HEK293 (cell line): ENCODE measurements at regions of chr2 and their contacts with region 1.

Region 1: DNA sequence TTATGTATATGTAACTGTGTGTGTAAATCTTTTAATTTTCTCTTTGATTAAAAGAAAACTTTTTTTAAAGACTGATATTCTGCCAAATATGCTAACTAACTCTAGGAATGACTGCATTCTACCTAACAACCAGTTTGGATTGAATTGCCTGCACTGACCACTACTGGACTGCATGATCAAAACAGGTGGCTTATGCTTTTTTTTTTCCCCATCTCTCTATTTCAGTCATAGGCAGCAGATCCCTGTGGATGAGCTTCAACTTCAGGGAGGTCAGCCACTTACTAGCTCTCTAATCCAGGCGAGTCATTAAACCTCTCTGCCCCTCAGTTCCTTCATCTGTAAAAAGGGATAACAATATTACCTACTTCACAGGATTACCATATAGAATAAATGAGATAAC is 138.6 kb upstream of the SERTAD2 start:
- H3K4me3 ChIP-seq: no peak overlapping the region
- H3K27ac ChIP-seq: no peak overlapping the region
- H3K4me1 ChIP-seq: peaks cover 9% of the 10 kb centered on the region
- CTCF ChIP-seq: no peak

Region 2: DNA sequence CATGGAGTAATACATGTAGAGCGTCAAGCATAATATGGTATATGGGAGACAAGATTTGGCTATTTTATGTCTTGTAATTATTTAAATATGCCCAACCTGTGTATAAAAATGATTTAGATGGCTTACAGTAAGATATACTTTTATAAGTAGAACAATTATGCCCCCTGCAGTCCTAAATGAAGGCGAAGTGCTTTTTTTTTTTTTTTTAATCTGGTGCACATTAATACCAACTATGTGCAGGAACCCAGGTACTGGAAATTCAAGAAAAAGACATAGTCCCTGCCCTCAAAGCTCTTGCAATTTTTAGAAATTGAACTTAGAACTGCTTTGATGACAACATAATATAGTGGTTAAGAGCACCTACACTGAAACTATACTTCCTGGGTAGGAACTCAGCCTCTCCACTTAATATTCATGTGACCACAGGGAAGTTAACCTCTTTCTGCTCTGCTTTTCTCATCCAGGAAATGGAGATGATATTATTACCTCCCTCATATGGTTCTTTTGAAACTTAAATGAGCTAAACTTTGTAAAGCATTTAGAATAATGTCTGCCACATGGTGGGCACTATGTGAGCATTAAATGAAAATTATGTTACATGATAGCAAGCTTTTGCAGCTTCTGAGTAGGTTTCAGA is 230.0 kb before region 1 on chr2:
- CTCF ChIA-PET with region 1: no interaction called
- POLR2A ChIA-PET with region 1: no interaction called
- H3K4me3 ChIP-seq: no peak overlapping the region
- H3K27ac ChIP-seq: no peak overlapping the region
- H3K4me1 ChIP-seq: peaks cover 21% of the 10 kb centered on the region
- CTCF ChIP-seq: no peak

Region 3: DNA sequence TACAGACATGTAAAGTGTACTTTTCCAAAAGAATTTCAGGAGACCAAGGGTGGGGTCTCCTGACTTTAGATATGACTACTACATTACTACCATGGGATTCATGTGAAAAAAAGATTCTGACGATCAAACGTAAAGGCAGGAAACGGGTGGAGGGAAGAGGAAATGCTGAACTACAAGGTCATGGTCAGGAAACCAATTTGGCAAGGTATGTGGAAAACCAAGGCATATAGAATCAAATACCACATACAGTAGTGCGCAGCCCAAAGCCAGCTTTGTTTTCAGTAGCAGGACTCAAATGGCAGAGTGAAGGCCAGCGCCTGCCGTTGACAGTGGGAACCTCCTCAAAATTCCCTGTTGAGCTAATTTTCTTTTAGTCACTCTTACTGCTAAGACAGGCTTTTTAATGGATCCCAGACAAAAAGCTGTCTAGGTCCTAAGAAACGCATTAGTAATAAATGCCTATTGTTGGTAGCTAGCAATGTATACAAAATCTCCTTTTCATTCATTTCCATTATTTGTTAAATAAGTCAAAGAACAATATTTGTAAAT is 81.0 kb before region 1 on chr2:
- CTCF ChIA-PET with region 1: no interaction called
- POLR2A ChIA-PET with region 1: no interaction called
- H3K4me3 ChIP-seq: no peak overlapping the region
- H3K27ac ChIP-seq: no peak overlapping the region
- H3K4me1 ChIP-seq: no peaks in the 10 kb centered on the region
- CTCF ChIP-seq: no peak

Region 4: DNA sequence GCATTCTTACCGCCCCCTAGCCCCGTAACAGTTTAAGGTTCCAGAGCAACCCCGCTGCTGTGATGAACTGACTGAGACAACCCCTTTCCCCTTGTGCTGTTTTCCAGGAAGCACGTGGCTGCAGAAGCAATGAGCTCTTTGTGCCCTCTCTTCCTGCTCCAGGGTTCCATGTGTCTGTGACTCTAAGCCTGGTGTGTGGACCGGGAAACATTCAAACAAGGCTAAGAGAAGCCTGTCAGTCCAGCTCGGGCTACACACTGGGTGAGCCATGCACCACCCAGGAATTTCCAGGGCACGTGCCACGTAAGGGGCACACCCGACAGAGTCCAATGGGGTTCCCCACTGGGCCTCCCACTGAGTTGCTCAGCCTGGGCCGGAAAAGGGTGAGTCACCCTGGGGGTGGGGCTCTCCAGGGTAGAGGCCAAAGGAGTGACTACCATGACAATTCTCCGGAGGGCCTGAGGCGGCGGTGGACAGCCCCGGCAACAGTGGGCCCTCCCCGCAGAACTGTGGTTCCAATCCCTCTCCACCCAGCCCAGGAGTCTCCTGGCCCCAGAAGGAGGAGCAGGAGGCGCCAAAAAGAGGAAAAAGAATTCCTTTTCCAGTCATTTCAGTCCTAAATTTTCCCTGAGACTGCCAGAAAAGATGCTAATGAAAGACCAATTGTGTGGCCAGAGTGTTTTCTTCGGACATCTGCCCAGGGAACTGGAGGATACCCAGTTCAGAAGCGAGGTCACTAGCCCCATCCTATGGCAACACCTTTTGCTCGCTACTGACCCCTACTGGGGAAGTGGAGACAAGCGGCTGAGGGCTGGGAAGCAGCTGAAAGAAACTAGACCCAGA is 39.0 kb after region 1 on chr2:
- CTCF ChIA-PET with region 1: interaction called, 13 read pairs
- POLR2A ChIA-PET with region 1: no interaction called
- H3K4me3 ChIP-seq: no peak overlapping the region
- H3K27ac ChIP-seq: no peak overlapping the region; the same call in 1 of the 2 replicates
- H3K4me1 ChIP-seq: no peaks in the 10 kb centered on the region
- CTCF ChIP-seq: peak; percentile 60; the same call in 1 of the 2 replicates